Posterior vena cava (tissue), 2 donors: ENCODE measurements at regions of chr21 and their contacts with region 1.

Region 1: GRCh38 chr21:25759573-25759972 is 24.8 kb downstream of the GABPA start:
- DNase-seq: no peak

Region 2: DNA sequence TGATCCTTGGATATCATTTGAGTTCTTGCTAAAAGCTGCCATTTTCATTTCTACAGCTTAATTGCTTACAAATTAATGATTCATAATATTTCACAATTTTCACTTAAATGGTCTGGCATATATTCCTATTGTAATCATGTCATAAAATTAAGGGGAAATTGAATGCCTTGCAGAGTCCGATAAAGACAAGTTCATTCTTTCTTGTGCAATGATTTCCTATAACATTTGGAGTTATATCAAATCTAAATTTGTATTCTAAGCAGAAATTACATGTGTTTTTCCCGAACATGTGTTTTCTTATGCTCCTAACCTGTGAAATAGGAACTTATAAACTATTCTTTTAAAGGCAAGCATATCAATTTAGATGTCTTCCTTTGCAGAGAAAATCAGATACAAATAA is 931.8 kb after region 1 on chr21:
- intact Hi-C with region 1: loop called in 1 of 2 experiments (anchors 5 kb)
- DNase-seq: no peak